A673 (cell line): ENCODE measurements at regions of chr1 and their contacts with region 1.

Region 1: DNA sequence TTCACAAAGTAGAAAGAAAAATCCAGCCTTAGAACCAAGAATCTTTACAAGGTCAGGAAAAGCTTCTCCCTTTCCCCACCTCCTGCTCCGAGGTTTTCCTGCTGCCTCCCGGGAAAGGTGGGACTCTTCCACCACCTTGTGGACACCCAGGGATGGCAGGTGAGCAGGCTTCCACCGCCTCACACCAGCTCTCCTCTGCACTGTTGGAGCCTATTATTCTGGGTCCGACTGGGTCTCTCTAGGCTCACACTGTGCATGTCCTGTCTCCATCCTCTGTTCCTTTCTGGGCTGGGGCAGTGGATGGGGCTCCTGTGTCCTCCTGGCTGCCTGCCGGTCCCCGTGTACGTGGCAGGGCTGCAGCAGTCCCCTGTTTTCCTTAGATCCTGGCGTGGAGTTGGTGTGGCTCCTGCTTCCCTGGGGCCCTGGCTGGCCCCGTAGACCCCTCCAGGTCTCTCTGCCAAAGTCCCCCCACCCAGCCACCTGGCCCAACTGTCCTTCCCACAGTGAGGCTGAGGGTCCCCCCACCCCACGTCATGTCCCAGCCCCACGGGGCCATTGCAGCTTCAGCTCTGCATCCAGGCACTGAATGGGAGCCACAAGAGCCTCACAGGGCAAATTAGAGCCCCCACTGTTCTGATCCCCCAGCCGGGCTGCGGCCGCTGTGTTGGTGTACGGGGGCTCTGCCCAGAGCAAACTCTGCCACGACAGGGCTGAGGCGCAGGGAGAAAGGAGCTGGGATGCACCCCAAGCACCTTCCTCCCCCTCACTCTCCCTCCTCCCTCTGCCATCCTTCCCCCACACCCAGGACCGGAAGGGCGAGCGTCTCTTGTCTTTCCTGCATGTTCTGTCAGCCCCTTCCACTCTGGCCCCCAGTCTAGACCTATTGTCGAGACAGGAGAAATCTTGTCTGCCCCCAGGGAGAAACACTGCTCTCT is 3.3 kb upstream of the SLC45A1 start:
- DNase-seq: peak; percentile 82
- H3K4me3 ChIP-seq: no peak overlapping the region
- H3K27ac ChIP-seq: no peak overlapping the region
- H3K4me1 ChIP-seq: peaks cover 6% of the 10 kb centered on the region
- H3K27me3 ChIP-seq: no peaks in the 10 kb centered on the region
- CTCF ChIP-seq: peak; percentile 88

Region 2: GRCh38 chr1:7975212-7975865 is 339.3 kb before region 1 on chr1:
- CTCF ChIA-PET with region 1: interaction called, 19 read pairs
- POLR2A ChIA-PET with region 1: no interaction called
- intact Hi-C with region 1: no loop called
- DNase-seq: peak; percentile 63
- H3K4me3 ChIP-seq: no peak overlapping the region
- H3K27ac ChIP-seq: no peak overlapping the region
- H3K4me1 ChIP-seq: no peaks in the 10 kb centered on the region
- H3K27me3 ChIP-seq: no peaks in the 10 kb centered on the region
- CTCF ChIP-seq: peak; percentile 89

Region 3: DNA sequence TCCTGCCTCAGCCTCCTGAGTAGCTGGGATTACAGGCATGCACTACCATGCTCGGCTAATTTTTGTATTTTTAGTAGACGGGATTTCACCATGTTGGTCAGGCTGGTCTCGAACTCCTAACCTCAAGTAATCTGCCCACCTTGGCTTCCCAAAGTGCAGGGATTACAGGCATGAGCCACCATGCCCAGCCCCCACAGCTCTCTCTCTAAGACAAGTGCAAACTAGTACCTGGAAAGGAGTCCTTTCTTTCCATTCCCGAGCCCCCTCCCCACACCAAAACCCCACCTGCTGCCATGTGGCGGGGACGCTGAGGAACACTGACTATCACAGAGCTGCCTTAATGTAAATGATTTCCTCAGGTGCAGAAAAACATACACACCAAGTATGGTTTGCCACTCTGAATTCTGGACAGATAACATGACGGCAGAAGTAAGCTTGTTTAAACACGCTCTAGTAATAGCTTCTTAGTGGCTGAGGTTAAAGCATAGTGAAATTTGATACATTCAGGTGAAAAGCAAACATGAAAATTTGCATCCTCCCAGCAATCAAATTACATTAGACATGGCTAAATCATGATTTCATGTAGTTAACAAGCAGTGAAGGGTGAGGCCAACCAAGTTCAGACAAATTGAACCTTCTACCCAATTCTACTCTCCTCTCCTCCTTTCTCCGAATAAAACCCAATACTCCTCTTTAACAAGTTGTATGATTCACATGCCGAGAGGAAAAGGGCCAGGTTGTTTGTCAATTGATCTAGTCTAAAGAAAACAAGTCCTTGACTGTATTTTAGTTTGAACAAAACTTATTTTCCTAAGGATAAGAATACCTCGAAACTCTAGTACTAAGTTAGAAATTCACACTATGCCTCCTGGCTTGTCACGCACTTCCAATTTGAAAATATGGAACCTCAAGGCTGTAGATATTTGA is 308.3 kb before region 1 on chr1:
- CTCF ChIA-PET with region 1: interaction called, 11 read pairs
- POLR2A ChIA-PET with region 1: interaction called, 3 read pairs
- intact Hi-C with region 1: no loop called
- DNase-seq: no peak
- H3K4me3 ChIP-seq: no peak overlapping the region
- H3K27ac ChIP-seq: no peak overlapping the region
- H3K4me1 ChIP-seq: peaks cover 19% of the 10 kb centered on the region
- H3K27me3 ChIP-seq: no peaks in the 10 kb centered on the region
- CTCF ChIP-seq: no peak

Region 4: GRCh38 chr1:8031176-8031785 is 283.3 kb before region 1 on chr1:
- CTCF ChIA-PET with region 1: interaction called, 13 read pairs
- POLR2A ChIA-PET with region 1: no interaction called
- intact Hi-C with region 1: loop called (anchors 1 kb)
- DNase-seq: peak; percentile 63
- H3K4me3 ChIP-seq: no peak overlapping the region
- H3K27ac ChIP-seq: no peak overlapping the region
- H3K4me1 ChIP-seq: peaks cover 24% of the 10 kb centered on the region
- H3K27me3 ChIP-seq: no peaks in the 10 kb centered on the region
- CTCF ChIP-seq: peak; percentile 69

Region 5: DNA sequence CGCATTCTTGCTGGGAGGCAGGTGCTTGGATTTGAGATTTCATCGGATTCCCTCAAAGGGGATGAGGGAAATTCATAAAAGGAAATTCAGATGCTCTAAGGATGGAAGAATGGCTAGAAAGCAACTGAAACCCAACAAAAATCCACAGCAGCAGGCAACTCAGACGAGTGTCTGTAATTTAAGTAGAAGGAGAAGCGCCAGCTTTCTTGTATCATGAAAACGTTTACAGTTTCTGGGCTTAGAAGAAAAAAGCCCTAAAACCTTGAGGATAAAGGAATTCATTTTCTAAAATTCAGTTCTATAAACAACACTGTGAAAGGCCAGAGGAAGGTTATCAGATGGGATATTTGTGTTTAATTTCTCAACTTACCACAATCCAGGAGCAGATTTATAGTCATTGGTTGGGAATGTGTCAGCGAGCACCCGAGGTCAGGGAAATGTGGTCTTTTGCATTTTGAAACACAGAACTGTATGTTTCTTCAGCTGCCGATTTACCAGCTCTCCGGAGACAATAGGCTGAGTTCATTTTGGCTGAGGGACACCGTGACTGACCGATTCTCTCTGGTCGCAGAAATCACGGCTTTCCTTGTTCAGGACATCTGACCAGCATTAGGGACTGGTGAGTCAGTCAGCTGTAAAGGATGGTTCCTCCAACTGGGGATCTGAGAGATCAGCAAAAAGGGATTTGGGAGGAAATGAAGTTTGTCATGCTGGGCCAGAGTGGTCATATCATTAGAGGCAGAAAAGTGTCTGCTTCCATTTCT is 176.9 kb before region 1 on chr1:
- CTCF ChIA-PET with region 1: no interaction called
- POLR2A ChIA-PET with region 1: no interaction called
- intact Hi-C with region 1: no loop called
- DNase-seq: no peak
- H3K4me3 ChIP-seq: no peak overlapping the region
- H3K27ac ChIP-seq: no peak overlapping the region
- H3K4me1 ChIP-seq: peaks cover 11% of the 10 kb centered on the region
- H3K27me3 ChIP-seq: no peaks in the 10 kb centered on the region
- CTCF ChIP-seq: no peak

Region 6: GRCh38 chr1:8334106-8334851 is 19.7 kb after region 1 on chr1:
- CTCF ChIA-PET with region 1: interaction called, 12 read pairs
- POLR2A ChIA-PET with region 1: no interaction called
- intact Hi-C with region 1: no loop called
- DNase-seq: no peak
- H3K4me3 ChIP-seq: no peak overlapping the region
- H3K27ac ChIP-seq: no peak overlapping the region
- H3K4me1 ChIP-seq: no peaks in the 10 kb centered on the region
- H3K27me3 ChIP-seq: no peaks in the 10 kb centered on the region
- CTCF ChIP-seq: no peak